ENCODE measurements at regions of chr14 and their contacts with region 1.

Region 1: DNA sequence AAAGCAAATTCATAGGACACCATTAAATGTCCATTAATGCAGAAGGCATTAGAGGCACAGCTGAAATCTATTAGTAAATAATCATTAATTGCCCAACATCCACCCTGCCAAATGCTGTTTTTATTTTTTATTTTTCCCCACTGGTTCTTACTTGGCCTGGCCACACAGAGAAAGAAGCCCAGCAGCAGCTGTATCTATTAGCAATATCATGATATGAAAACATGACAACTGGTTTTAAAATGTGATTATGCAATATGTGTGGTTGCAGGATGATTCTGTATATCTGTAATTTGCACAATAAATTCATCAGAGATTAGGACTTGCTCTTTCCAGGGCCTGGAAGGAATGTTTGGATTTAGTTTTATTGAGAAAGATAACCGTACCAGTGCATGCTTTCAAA is 44.9 kb downstream of the SIX6 start:
- DNase-seq: no peak
- ATAC-seq: no peak
- H3K4me3 ChIP-seq: no peak overlapping the region
- H3K27ac ChIP-seq: no peak overlapping the region
- H3K4me1 ChIP-seq: peaks cover 0 to 4% (median 0%) of the 10 kb centered on the region in 3 donors
- H3K27me3 ChIP-seq: no peaks in the 10 kb centered on the region
- CTCF ChIP-seq: no peak

Region 2: GRCh38 chr14:60349663-60350365 is 204.0 kb before region 1 on chr14:
- intact Hi-C with region 1: loop called in 1 of 3 experiments (anchors 10 kb)
- DNase-seq: peak in 2 of 6 donors; percentile 16 to 31
- ATAC-seq: peak in 3 of 4 donors; percentile 77 to 83 (median 80)
- H3K4me3 ChIP-seq: no peak overlapping the region
- H3K27ac ChIP-seq: no peak overlapping the region
- H3K4me1 ChIP-seq: peaks cover 0 to 3% (median 0%) of the 10 kb centered on the region in 3 donors
- H3K27me3 ChIP-seq: peaks cover 0 to 3% (median 0%) of the 10 kb centered on the region in 4 donors
- CTCF ChIP-seq: peak; percentile 36 to 58 (median 42)

Measured in pancreas (tissue), 10 donors.